ENCODE measurements at regions of chr1 and their contacts with region 1.

Region 1: DNA sequence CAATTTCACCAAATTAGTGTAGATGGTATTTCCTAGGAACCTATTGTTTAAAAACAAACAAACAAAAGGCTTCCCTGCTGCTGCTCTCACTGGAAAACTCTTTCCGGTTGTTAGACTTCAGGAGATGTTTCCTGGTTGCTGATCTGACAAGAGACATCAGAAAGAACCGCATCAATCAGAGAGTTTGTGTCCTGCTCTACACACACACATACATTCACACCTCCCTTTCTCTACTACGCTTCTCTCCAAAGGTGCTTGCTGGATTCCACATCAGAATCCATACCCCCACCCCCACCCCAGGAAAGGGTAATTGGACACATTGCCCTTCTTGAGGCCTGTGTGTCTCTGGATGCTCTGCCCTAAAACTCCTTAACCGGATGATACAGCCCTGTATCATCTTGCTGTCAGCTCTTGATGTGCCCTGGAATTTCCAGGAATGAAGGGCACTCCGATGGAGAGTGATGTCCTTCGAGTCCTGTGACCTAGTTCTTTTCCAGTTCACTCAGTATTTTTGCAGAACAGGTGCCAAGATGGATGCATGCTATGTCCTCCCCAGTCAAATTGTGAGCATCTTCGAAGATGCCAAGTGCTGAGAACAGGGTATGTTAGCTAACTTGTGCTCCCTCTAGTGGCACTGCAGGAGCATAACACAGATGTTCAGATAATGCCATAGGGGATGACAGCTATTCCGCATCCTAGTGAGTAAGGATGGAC is 113.7 kb upstream of the SLC35F3 start:
- DNase-seq: peak; percentile 69
- H3K4me3 ChIP-seq: no peak overlapping the region; a peak in 1 of 4 replicates
- H3K27ac ChIP-seq: no peak overlapping the region
- H3K4me1 ChIP-seq: no peaks in the 10 kb centered on the region
- H3K27me3 ChIP-seq: no peaks in the 10 kb centered on the region
- CTCF ChIP-seq: peak; percentile 94
- EP300 ChIP-seq: no peak
- RAD21 ChIP-seq: peak; percentile 96

Region 2: GRCh38 chr1:233448109-233448689 is 342.6 kb before region 1 on chr1:
- CTCF ChIA-PET with region 1: interaction called, 17 read pairs
- POLR2A ChIA-PET with region 1: no interaction called
- DNase-seq: peak; percentile 67
- H3K4me3 ChIP-seq: no peak overlapping the region
- H3K27ac ChIP-seq: peak overlapping the region in 1 of 2 experiments; percentile 90; a peak in 2 of 4 replicates
- H3K4me1 ChIP-seq: peaks cover 0 to 17% of the 10 kb centered on the region in 2 experiments; a peak in 2 of 4 replicates
- H3K27me3 ChIP-seq: no peaks in the 10 kb centered on the region
- CTCF ChIP-seq: no peak
- EP300 ChIP-seq: peak in 1 of 2 experiments; percentile 75; a peak in 2 of 4 replicates
- RAD21 ChIP-seq: no peak; the same call in 1 of the 2 replicates

Region 3: DNA sequence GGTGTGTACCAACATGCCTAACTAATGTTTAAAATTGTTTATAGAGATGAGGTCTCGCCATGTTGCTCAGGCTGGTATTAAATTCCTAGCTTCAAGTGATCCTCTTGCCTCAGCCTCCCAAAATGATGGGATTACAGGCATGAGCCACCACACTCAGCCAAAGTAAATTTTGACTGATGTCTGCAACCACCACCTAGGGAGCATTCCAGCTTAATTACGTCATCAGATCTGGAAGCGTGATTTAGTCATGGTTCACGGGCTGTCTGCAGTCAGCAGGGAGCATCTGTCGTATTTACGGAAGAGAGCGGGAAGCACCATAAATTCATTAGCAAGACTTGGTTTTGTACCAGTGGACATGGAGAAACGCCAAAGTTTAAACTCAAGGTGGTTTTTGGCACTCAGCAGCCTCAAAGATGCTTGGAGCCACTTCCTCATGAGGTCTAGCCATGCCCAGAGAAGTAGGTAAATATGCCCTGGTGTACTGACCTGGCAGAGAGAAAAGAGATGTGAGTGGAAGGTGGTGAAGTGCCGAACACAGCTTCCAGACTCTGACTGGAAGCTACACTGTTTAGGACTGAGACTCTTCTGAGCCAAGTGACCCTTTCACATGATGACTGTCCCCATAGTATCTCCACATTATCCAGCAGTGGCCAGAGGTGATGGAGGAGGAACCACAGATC is 52.8 kb after region 1 on chr1:
- CTCF ChIA-PET with region 1: no interaction called
- POLR2A ChIA-PET with region 1: no interaction called
- DNase-seq: no peak
- H3K4me3 ChIP-seq: no peak overlapping the region
- H3K27ac ChIP-seq: no peak overlapping the region
- H3K4me1 ChIP-seq: no peaks in the 10 kb centered on the region
- H3K27me3 ChIP-seq: no peaks in the 10 kb centered on the region
- CTCF ChIP-seq: no peak
- EP300 ChIP-seq: no peak
- RAD21 ChIP-seq: no peak

Region 4: DNA sequence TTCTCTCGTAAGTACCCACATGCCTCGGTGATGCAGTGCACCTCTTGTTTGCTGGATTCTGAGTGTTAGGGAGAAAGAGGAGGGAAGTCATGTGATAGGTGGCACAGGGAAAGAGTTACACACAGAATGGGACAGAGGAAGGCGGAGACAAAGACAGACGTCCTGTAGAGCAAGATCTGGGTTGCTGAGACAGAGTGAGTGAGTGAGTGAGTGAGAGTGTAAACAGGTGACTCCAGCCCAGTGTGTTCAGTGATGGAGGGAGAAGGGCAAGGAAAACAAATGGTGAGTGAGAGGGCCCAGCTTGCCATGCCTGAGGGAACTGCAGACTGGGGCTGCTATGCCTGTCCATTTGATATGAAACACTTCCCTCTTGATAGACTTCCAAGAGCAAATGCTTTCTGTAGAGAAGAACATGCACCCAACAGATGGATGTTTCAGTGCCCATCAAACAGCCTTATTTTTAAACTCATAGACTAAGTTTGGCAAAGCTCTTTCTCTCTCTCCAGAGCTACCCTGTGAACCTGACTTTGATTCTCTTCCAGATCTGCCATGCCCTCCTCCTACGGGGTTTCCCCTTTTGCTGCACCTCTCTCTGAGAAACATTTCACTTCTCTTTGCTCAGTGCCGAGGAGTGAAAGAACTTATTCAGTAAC is 372.6 kb after region 1 on chr1:
- CTCF ChIA-PET with region 1: no interaction called
- POLR2A ChIA-PET with region 1: no interaction called
- DNase-seq: no peak
- H3K4me3 ChIP-seq: no peak overlapping the region
- H3K27ac ChIP-seq: no peak overlapping the region
- H3K4me1 ChIP-seq: no peaks in the 10 kb centered on the region
- H3K27me3 ChIP-seq: no peaks in the 10 kb centered on the region; the same call in 1 of the 2 replicates
- CTCF ChIP-seq: no peak
- EP300 ChIP-seq: no peak
- RAD21 ChIP-seq: no peak

Measured in SK-N-SH (cell line).